ENCODE measurements at regions of chr2 and their contacts with region 1.

Region 1: DNA sequence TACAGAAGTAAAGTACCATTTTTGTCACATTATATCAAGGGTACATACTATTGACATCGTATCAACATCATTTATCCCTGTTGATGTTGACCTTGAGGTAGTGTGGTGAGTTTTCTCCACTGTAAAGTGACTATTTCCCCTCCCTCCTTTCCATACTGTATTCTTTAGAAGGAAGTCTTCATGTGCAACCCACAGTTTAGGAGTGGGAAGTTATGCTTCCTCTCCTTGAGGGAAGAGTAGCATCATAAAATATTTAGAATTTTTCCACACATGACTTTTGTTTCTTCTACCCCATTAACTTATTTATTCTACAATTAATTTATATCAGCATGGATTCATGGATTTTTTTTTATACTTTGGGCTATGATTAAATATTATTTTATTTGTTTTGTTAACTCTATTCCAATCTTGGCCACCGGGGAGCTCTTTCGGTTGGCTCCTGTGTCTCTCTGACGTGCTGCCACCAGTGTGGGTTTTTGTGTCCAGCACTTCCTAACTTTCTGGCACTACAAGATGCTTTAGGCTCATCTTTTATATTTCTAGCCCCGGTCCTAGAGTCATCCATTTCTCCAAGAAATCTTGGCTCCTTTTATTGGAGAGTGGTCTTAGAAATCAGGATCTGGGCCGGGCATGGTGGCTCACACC is 19.0 kb downstream of the AQP12B start:
- DNase-seq: no peak
- ATAC-seq: no peak
- H3K4me3 ChIP-seq: no peak overlapping the region
- H3K4me3 Mint-ChIP-seq: no peak overlapping the region
- H3K27ac ChIP-seq: no peak overlapping the region
- H3K27ac Mint-ChIP-seq: no peak overlapping the region
- H3K4me1 ChIP-seq: no peaks in the 10 kb centered on the region
- H3K4me1 Mint-ChIP-seq: no peaks in the 10 kb centered on the region
- H3K27me3 ChIP-seq: peaks cover 5 to 10% of the 10 kb centered on the region in 2 experiments
- H3K27me3 Mint-ChIP-seq: peaks cover 61% of the 10 kb centered on the region
- CTCF ChIP-seq: no peak

Region 2: GRCh38 chr2:240714747-240715725 is 51.4 kb after region 1 on chr2:
- CTCF ChIA-PET with region 1: no interaction called
- POLR2A ChIA-PET with region 1: no interaction called
- intact Hi-C with region 1: loop called in 1 of 2 experiments (anchors 10 kb)
- DNase-seq: no peak
- ATAC-seq: no peak
- H3K4me3 ChIP-seq: no peak overlapping the region
- H3K4me3 Mint-ChIP-seq: no peak overlapping the region
- H3K27ac ChIP-seq: no peak overlapping the region
- H3K27ac Mint-ChIP-seq: no peak overlapping the region
- H3K4me1 ChIP-seq: no peaks in the 10 kb centered on the region
- H3K4me1 Mint-ChIP-seq: no peaks in the 10 kb centered on the region
- H3K27me3 ChIP-seq: no peaks in the 10 kb centered on the region
- H3K27me3 Mint-ChIP-seq: no peaks in the 10 kb centered on the region
- CTCF ChIP-seq: no peak